HEK293T (cell line): ENCODE measurements at regions of chr1 and their contacts with region 1.

Region 1: GRCh38 chr1:110034451-110035235 is at the start of gene STRIP1:
- DNase-seq: peak; percentile 96

Region 2: GRCh38 chr1:110005971-110006370 is 28.7 kb before region 1 on chr1:
- CTCF ChIA-PET with region 1: interaction called, 12 read pairs
- POLR2A ChIA-PET with region 1: interaction called, 4 read pairs
- DNase-seq: no peak

Region 3: GRCh38 chr1:110024613-110025012 is 10.0 kb before region 1 on chr1:
- CTCF ChIA-PET with region 1: interaction called, 8 read pairs
- POLR2A ChIA-PET with region 1: interaction called, 10 read pairs
- DNase-seq: no peak

Region 4: DNA sequence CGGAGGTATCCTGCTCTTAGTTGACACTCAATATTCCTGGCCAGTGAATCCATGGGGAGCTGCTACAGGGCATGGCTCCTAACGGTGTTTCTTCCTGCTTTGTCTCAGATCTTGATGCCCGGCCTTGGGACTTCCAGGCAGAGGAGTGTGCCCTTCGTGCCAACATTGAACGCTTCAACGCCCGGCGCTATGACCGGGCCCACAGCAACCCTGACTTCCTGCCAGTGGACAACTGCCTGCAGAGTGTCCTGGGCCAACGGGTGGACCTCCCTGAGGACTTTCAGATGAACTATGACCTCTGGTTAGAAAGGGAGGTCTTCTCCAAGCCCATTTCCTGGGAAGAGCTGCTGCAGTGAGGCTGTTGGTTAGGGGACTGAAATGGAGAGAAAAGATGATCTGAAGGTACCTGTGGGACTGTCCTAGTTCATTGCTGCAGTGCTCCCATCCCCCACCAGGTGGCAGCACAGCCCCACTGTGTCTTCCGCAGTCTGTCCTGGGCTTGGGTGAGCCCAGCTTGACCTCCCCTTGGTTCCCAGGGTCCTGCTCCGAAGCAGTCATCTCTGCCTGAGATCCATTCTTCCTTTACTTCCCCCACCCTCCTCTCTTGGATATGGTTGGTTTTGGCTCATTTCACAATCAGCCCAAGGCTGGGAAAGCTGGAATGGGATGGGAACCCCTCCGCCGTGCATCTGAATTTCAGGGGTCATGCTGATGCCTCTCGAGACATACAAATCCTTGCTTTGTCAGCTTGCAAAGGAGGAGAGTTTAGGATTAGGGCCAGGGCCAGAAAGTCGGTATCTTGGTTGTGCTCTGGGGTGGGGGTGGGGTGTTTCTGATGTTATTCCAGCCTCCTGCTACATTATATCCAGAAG is 19.1 kb after region 1 on chr1:
- CTCF ChIA-PET with region 1: interaction called, 6 read pairs
- POLR2A ChIA-PET with region 1: interaction called, 15 read pairs
- DNase-seq: peak; percentile 85

Region 5: GRCh38 chr1:110130113-110130596 is 95.5 kb after region 1 on chr1:
- CTCF ChIA-PET with region 1: no interaction called
- POLR2A ChIA-PET with region 1: no interaction called
- DNase-seq: no peak

Region 6: GRCh38 chr1:110161877-110162276 is 127.2 kb after region 1 on chr1:
- CTCF ChIA-PET with region 1: no interaction called
- POLR2A ChIA-PET with region 1: no interaction called
- DNase-seq: no peak